Esophagus muscularis mucosa (tissue), 4 donors: ENCODE measurements at regions of chr2 and their contacts with region 1.

Region 1: GRCh38 chr2:218852911-218853667 is 6.5 kb upstream of the WNT6 start:
- DNase-seq: no peak
- H3K4me3 ChIP-seq: no peak overlapping the region
- H3K27ac ChIP-seq: no peak overlapping the region
- H3K4me1 ChIP-seq: peaks cover 0 to 4% (median 1%) of the 10 kb centered on the region in 4 donors
- H3K27me3 ChIP-seq: peaks cover 0 to 91% (median 25%) of the 10 kb centered on the region in 4 donors
- CTCF ChIP-seq: peak; percentile 54 to 66 (median 64)
- EP300 ChIP-seq: no peak
- POLR2A ChIP-seq: no peak

Region 2: DNA sequence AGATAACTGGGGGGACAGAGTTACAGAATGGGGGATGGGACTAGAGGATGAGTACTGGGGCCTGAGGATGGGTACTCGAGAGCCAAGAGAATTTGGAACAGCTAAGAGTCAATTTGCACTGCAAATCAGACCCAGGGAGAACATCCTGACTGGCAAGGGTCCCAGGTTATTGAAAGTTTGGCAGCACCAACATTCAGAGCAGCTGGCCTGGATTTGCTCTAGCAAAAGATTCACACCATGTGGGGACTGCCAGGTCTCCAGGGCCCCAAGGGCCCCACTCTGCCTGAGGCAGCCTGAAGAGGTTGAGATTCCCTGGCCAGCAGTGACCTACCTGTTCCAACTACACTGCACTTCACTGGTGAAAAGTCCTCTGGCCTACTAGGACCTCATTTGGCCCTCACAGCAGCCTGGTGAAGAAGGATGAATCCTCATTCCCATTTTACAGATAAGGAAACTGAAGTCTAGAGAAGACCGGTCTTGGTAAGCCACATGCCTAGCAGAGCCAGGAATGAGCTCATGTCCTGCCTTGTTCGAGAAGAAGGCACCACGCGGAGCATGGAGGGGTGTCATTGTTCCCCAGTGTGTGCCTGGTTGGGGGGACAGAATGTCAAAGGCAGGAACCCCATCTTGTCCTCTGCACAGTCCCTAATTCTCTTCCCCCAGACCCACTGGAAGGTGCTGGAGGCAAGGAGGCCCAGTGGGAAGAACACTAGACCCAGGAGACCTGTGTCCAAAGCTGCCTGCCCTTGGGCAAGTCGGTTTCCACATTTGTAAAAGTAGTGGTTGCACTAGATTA is 1108.9 kb before region 1 on chr2:
- intact Hi-C with region 1: no loop called
- DNase-seq: peak; percentile 88
- H3K4me3 ChIP-seq: no peak overlapping the region
- H3K27ac ChIP-seq: peak overlapping the region in 2 of 4 donors; percentile 15 to 36
- H3K4me1 ChIP-seq: peaks cover 6 to 74% (median 43%) of the 10 kb centered on the region in 4 donors
- H3K27me3 ChIP-seq: no peaks in the 10 kb centered on the region
- CTCF ChIP-seq: no peak
- EP300 ChIP-seq: no peak
- POLR2A ChIP-seq: no peak

Region 3: GRCh38 chr2:218710687-218711549 is 142.2 kb before region 1 on chr2 and contains the start of gene TTLL4:
- intact Hi-C with region 1: loop called (anchors 5 kb)
- DNase-seq: peak; percentile 99
- H3K4me3 ChIP-seq: peak within 1 kb of the TSS; percentile 83 to 95 (median 86)
- H3K27ac ChIP-seq: peak within 1 kb of the TSS; percentile 92 to 97 (median 94)
- H3K4me1 ChIP-seq: peaks cover 4 to 33% (median 20%) of the 10 kb centered on the region in 4 donors
- H3K27me3 ChIP-seq: no peaks in the 10 kb centered on the region
- CTCF ChIP-seq: peak; percentile 78 to 95 (median 86)
- EP300 ChIP-seq: no peak
- POLR2A ChIP-seq: peak; percentile 13
- total RNA-seq, gene TTLL4: 5.8 to 11.3 (median 8.3) TPM